ENCODE measurements at regions of chr13 and their contacts with region 1.

Region 1: DNA sequence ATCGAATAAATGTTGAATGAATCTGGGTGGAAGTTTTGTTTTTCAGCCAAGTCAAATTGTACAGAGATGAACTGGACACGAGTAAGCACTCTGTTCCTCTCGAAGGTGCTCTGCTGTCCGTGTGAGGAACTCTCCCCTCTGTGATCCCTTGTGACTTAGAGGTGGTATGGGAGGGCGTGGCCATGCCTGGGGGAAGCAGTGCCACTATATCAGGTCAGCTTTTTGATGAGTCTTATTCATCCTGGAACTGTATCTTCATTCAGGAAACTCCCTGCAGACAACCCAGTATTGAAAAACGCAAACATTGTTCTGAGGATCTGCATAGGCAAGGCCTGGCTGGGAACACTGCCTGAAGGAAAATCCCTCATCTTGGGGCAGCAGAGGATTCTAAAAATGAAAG is 45.7 kb upstream of the FLT1 start:
- DNase-seq: peak; percentile 61
- H3K4me3 Mint-ChIP-seq: peak overlapping the region; percentile 33
- H3K27ac Mint-ChIP-seq: peak overlapping the region; percentile 86
- H3K4me1 Mint-ChIP-seq: peaks cover 29% of the 10 kb centered on the region
- H3K27me3 Mint-ChIP-seq: peaks cover 33% of the 10 kb centered on the region

Region 2: DNA sequence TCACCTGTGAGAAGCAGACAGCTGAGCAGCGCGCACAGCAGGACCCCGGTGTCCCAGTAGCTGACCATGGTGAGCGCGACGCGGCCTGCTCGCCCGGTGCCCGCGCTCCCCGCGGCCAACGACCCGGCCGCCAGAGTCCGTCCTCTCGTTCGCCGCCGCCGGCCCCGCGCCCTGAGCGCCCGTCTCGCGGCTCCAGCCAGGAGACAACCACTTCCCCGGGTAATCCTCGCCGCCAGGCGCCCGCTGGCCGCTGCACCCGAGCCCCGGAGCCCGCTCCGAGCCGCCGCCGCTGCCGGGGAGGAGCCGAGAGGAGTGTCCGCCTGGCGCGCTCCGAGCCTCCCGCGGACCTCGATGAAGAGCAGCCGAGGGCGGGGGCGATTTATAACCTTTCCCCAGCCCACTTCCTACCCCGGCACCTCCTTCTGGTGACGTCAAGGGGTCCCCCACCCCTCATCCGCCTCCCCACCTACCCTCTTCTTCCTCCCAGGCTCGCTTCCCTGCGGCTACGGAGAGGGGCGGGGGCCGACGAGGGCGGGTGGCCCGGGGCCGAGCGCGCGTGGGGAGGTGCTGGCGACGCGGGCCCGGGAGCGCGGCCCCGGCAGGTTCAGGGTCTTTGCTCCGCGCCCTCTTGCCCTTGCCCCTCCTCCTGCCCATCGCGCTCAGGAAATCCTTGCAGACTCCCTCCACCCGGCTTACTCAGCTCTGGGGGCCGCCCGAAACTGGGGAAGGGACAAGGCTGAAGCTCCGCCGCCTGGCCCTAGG is 45.7 kb before region 1 on chr13 and contains the start of gene FLT1:
- CTCF ChIA-PET with region 1: no interaction called
- POLR2A ChIA-PET with region 1: interaction called, 11 read pairs
- intact Hi-C with region 1: loop called (anchors 5 kb)
- DNase-seq: peak; percentile 39
- H3K4me3 Mint-ChIP-seq: peak within 1 kb of the TSS; percentile 70
- H3K27ac Mint-ChIP-seq: no peak within 1 kb of the TSS
- H3K4me1 Mint-ChIP-seq: peaks cover 10% of the 10 kb centered on the region
- H3K27me3 Mint-ChIP-seq: peaks cover 47% of the 10 kb centered on the region
- total RNA-seq, gene FLT1: 17.2 to 19.5 TPM

Region 3: DNA sequence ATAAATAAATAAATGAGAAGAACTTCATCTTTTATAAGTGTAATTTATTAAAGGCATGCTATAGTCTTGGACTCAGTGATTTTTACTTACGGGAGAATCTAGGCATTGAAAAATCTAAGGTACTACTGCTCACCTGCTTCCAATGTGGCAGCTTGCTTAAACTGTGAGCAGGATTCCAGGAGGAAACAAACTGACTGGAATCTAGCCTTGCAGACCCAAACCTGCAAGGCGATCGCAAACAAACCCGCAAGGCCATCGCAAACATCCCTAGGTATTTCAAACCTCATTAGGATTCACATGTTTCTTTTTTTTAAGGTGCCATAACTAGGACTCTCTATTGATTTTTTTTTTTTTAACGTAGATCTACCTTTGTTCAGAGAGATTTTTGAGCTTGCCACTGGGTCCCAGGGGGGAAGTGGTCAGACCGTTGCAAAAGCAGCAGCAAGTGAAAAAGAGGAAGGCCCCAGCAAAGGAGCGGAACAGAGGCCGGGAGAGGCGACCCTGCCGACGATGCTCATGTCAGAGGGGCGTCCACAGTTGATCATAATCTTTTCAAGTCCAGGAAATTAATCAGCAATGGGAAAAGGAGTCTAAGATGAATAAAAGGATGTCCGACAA is 13.1 kb before region 1 on chr13:
- CTCF ChIA-PET with region 1: no interaction called
- POLR2A ChIA-PET with region 1: no interaction called
- intact Hi-C with region 1: loop called (anchors 1 kb)
- DNase-seq: no peak
- H3K4me3 Mint-ChIP-seq: no peak overlapping the region
- H3K27ac Mint-ChIP-seq: no peak overlapping the region
- H3K4me1 Mint-ChIP-seq: peaks cover 12% of the 10 kb centered on the region
- H3K27me3 Mint-ChIP-seq: peaks cover 29% of the 10 kb centered on the region

Region 4: DNA sequence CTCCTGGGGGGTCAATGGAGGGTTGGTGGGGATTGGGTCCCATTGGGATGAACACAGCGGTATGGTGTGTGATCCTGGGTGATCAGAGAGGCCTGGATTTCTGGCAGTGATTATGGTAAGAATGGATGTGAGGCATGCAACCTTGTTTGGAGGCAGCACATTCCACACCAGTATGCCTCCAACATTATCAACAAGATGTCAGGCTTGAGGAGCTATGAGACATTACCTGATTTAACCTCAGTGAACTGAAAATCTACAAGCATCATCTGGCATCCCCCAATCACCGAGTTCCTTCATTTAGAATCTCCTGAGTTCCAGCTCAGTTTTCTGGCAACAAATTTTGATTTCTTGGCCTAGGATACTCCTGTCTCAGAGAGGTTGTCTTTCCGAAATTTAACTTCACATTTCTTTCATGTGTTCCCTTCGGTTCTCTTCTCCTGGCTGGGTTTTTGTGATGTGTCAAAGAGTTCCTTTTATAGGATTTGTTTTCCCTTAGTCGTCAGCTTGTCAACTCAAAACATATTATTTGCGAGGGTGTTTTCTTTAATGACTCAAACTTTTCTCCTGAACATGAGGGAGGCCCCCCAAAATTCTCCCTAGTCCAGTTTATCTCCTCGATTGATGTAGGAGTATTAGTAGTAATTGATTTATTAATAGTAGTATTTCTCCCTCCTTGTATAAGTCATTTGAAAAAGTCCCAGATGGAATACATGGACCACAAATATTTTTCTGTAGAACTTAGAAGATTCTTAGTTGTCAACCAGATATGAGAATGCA is 10.3 kb after region 1 on chr13:
- CTCF ChIA-PET with region 1: no interaction called
- POLR2A ChIA-PET with region 1: interaction called, 7 read pairs
- intact Hi-C with region 1: loop called (anchors 1 kb)
- DNase-seq: no peak
- H3K4me3 Mint-ChIP-seq: no peak overlapping the region
- H3K27ac Mint-ChIP-seq: peak overlapping the region; percentile 86
- H3K4me1 Mint-ChIP-seq: peaks cover 16% of the 10 kb centered on the region
- H3K27me3 Mint-ChIP-seq: peaks cover 12% of the 10 kb centered on the region

Region 5: GRCh38 chr13:28574617-28575142 is 34.1 kb after region 1 on chr13:
- CTCF ChIA-PET with region 1: no interaction called
- POLR2A ChIA-PET with region 1: no interaction called
- intact Hi-C with region 1: loop called (anchors 1 kb)
- DNase-seq: peak; percentile 67
- H3K4me3 Mint-ChIP-seq: no peak overlapping the region
- H3K27ac Mint-ChIP-seq: peak overlapping the region; percentile 67
- H3K4me1 Mint-ChIP-seq: peaks cover 13% of the 10 kb centered on the region
- H3K27me3 Mint-ChIP-seq: peaks cover 6% of the 10 kb centered on the region

Region 6: GRCh38 chr13:28611654-28612131 is 71.1 kb after region 1 on chr13:
- CTCF ChIA-PET with region 1: interaction called, 3 read pairs
- POLR2A ChIA-PET with region 1: no interaction called
- intact Hi-C with region 1: loop called (anchors 1 kb)
- DNase-seq: peak; percentile 30
- H3K4me3 Mint-ChIP-seq: no peak overlapping the region
- H3K27ac Mint-ChIP-seq: peak overlapping the region; percentile 70
- H3K4me1 Mint-ChIP-seq: peaks cover 28% of the 10 kb centered on the region
- H3K27me3 Mint-ChIP-seq: no peaks in the 10 kb centered on the region

Region 7: DNA sequence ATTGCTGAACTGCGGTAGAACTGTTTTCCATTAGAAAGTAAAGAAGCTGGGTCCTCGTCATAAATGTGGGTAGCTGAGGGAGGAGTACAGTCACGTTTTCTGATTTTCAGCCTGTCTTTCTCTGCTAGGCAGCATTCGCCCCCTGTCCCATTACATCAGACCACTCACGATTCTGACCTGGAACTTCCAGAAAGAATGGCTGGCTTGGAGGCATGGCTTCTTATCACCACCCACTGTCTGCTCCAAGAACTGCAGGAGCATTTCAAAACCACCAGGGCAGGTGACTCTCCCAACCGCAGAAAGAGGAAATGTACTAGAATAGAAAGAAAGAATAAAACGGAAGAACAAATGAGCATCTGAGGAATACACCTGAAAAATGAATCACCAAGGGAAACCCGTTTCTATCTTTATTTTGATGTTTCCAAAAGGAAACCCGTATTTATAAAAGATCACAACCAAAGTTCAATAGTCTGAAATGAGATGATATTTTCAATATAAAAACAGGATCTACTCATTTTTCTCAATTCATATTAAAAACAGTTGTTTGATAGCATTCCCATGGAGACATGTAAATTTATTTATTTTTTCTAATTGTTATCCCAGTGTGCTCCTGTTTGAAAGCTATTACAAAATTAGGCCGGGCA is 96.2 kb after region 1 on chr13:
- CTCF ChIA-PET with region 1: interaction called, 4 read pairs
- POLR2A ChIA-PET with region 1: no interaction called
- intact Hi-C with region 1: loop called (anchors 5 kb)
- DNase-seq: peak; percentile 72
- H3K4me3 Mint-ChIP-seq: no peak overlapping the region
- H3K27ac Mint-ChIP-seq: no peak overlapping the region
- H3K4me1 Mint-ChIP-seq: peaks cover 6% of the 10 kb centered on the region
- H3K27me3 Mint-ChIP-seq: peaks cover 27% of the 10 kb centered on the region